Ascending aorta (tissue), 2 donors: ENCODE measurements at regions of chr20 and their contacts with region 1.

Region 1: DNA sequence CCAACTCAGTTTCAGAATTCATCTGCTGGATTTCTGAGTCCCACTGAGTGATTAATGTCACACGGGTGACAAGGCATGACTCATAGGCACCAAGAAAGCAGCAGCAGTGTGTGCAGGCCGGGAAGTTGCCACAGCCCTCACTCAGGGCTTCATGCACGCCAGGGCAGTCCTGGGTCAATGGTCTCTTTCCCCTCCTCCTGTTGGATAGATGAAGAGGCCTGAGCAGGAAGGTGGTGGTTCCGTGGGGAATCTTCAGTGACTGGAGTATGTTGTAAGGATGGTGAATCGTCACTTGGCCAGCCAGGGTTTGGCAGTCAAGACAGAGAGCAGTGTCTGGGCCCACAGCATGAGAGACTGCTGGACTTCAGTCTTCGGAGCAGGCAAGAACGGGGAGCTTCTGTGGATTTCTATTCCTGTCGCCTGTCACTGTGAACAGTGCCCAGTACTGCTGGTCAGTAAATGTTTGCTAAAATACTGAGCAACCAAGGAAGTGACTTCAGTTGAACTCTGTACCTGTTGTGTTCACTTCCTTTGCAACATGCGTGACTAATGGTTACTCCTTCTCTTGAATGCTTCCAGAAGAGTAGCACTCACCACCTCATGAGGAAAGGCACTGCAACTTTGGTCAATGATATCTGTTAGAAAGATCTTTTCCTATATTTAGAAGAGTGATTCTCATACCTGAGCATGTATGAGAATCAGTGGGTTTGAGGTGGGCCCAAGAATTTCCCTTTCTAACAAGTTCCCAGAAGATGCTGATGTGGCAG is 62.0 kb upstream of the CD93 start:
- DNase-seq: peak; percentile 79 to 95
- H3K4me3 ChIP-seq: no peak overlapping the region
- H3K27ac ChIP-seq: peak overlapping the region; percentile 93 to 96
- H3K4me1 ChIP-seq: peaks cover 30 to 87% of the 10 kb centered on the region in 2 donors
- H3K27me3 ChIP-seq: no peaks in the 10 kb centered on the region
- CTCF ChIP-seq: no peak

Region 2: DNA sequence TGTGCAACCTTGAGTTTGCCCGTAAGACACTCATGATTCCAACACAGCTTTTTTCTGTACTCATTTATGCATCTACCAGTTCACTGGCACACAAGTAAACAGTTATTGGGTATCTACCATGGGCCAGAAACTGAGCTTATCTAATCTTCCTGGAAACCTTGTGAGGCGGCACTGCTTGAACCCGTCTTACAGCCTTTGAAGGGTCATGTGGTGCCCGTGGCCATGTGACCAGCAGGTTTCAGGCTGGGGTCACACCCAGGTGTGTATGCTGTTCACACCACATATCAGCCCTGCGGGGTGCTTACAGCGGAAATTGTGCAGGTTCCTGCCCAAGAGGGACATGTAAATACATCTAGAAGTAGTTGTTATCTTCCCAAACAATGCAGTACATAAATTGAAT is 104.8 kb before region 1 on chr20:
- intact Hi-C with region 1: no loop called
- DNase-seq: peak in 1 of 2 donors; percentile 49
- H3K4me3 ChIP-seq: no peak overlapping the region
- H3K27ac ChIP-seq: no peak overlapping the region
- H3K4me1 ChIP-seq: peaks cover 9 to 20% of the 10 kb centered on the region in 2 donors
- H3K27me3 ChIP-seq: no peaks in the 10 kb centered on the region
- CTCF ChIP-seq: no peak

Region 3: DNA sequence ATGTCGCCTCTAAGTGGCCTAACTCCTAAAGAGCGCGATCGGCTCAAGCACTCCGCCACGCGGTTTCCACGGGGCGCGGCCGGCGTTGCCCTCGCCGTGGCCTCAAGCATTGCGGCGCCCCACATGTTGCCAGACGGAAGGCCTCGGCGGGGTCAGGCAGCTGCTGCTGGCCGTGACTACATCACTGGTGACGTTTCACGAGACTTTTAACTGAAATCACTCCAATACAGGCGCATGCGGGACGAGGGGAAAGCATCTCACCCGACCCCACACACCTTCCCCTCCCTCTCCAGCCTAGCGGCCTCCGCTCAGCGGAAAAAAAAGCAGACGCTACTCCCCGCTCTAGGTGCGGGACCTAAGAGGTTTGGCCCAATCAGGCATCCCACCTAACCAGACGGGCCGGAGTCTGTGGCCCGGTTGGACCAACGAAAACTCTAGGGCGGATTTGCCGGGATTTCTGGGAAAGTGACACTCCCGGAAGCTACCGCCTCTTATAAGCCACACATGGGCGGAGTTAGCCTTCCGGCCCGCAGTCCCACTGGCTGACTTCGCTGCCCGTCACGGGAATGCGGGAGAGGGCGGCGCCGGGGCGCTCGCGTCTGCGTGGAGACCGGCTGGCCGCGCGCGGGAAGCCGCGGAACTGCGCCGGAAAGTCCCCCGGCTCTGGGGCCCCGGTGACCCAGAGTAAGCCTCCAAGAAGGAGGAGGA is 202.2 kb after region 1 on chr20 and contains the start of gene NXT1:
- intact Hi-C with region 1: loop called (anchors 1 kb)
- DNase-seq: peak; percentile 93 to 99
- H3K4me3 ChIP-seq: peak within 1 kb of the TSS; percentile 93 to 97
- H3K27ac ChIP-seq: peak within 1 kb of the TSS; percentile 99 to 100
- H3K4me1 ChIP-seq: peaks cover 3 to 18% of the 10 kb centered on the region in 2 donors
- H3K27me3 ChIP-seq: no peaks in the 10 kb centered on the region
- CTCF ChIP-seq: peak in 1 of 3 experiments; percentile 0
- total RNA-seq, gene NXT1: 50.0 TPM

Region 4: DNA sequence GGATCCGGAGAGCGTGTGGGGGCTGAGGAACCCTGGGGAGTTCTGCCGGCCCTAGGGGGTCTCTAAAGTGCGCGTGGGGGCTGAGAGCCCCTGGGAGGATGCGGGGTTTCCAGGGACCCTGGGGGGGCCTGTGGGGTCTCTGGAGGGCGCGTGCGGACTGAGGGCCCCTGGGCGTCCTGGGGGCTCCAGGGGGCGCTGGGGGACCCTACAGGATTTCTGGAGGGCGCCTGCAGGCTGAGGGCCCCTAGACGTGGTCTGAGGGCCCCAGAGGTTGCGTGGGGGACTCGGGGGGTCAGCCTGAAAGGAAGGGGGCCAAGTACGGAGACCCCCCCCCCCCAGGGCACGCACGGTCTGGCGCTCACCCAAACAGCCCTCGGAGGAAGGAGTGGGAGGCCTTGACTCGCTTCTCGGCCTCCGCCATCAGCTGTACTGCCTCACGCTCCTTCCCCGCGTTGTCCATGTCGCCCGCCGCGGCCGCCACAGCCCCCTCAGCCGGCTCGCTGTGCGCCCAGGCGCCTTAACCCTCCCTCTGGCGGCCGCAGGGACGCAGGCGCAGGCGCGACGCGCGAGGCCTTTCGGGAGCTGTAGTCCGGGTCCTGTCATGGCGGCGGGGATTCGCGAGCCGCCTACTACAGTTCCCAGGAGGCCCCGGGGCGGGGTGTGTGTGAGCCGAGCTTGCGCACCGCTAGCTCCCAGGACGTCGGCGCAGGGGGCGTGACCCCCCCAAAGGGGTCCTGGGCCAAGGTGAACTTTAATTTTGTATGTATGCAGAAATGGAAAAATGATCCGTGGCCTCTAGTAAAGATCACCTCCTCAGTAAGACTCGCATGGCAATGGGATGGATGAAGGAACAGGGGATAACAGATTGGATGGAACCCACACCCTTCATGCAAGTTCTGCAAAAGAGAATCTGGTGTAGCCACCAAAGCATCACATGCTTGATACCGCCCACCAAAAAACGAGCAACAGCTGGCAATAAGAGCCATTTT is 273.1 kb after region 1 on chr20 and contains the start of gene NAPB:
- intact Hi-C with region 1: loop called (anchors 10 kb)
- DNase-seq: peak; percentile 76 to 96
- H3K4me3 ChIP-seq: peak within 1 kb of the TSS; percentile 70 to 99
- H3K27ac ChIP-seq: peak within 1 kb of the TSS; percentile 87 to 91
- H3K4me1 ChIP-seq: peaks cover 0 to 6% of the 10 kb centered on the region in 2 donors
- H3K27me3 ChIP-seq: no peaks in the 10 kb centered on the region
- CTCF ChIP-seq: peak; percentile 40 to 84 (median 44)
- total RNA-seq, gene NAPB: 0.75 TPM

Region 5: GRCh38 chr20:23622839-23623343 is 474.7 kb after region 1 on chr20:
- intact Hi-C with region 1: loop called (anchors 5 kb)
- DNase-seq: peak; percentile 50 to 88
- H3K4me3 ChIP-seq: peak overlapping the region; percentile 34 to 55
- H3K27ac ChIP-seq: peak overlapping the region; percentile 88 to 91
- H3K4me1 ChIP-seq: peaks cover 0 to 17% of the 10 kb centered on the region in 2 donors
- H3K27me3 ChIP-seq: no peaks in the 10 kb centered on the region
- CTCF ChIP-seq: no peak